ENCODE measurements at regions of chr1 and their contacts with region 1.

Region 1: GRCh38 chr1:7474786-7475502 is 296.2 kb upstream of the VAMP3 start:
- DNase-seq: peak; percentile 51
- ATAC-seq: peak; percentile 75
- H3K4me3 Mint-ChIP-seq: no peak overlapping the region
- H3K27ac Mint-ChIP-seq: no peak overlapping the region
- H3K4me1 Mint-ChIP-seq: no peaks in the 10 kb centered on the region
- H3K27me3 Mint-ChIP-seq: no peaks in the 10 kb centered on the region
- CTCF ChIP-seq: no peak

Region 2: GRCh38 chr1:7224644-7225043 is 250.3 kb before region 1 on chr1:
- CTCF ChIA-PET with region 1: interaction called, 28 read pairs
- POLR2A ChIA-PET with region 1: no interaction called
- DNase-seq: peak; percentile 50
- ATAC-seq: peak; percentile 69
- H3K4me3 Mint-ChIP-seq: no peak overlapping the region
- H3K27ac Mint-ChIP-seq: no peak overlapping the region
- H3K4me1 Mint-ChIP-seq: no peaks in the 10 kb centered on the region
- H3K27me3 Mint-ChIP-seq: no peaks in the 10 kb centered on the region
- CTCF ChIP-seq: no peak

Region 3: DNA sequence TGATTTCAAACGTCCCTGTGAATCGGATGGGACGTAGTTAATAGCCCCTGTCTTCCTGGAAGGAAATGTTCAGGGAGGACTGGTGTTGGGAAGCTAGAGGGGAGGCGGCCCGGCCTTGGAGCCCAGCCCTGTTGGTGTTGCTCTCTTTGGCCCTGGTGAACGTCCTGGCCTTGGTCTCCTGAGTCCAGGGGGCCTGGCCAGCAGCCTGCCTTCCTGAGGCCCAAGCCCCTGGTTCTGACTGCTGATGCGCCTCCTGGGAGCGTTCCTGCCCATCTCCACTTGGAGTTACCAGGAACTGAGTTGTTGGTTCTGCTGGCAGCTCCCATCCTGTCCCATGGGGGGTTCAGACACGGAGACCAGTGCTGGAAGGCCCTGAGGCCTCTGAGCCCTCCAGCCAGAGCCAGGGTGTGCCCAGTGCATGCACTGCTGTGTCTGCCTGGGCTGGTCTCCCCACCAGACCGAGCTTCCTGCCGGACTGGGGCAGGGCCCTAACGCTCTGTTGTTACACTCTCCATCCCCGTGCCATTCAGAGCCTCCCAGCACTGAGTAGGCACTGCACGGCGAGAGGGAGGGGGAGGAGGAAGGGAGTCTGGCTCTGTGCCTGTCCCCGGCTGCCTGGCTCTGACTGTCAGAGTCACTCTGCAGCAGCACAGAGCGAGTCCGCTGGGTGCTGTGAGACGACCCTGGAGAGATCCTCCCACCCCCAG is 86.3 kb before region 1 on chr1:
- CTCF ChIA-PET with region 1: no interaction called
- POLR2A ChIA-PET with region 1: no interaction called
- DNase-seq: no peak
- ATAC-seq: peak; percentile 46
- H3K4me3 Mint-ChIP-seq: no peak overlapping the region
- H3K27ac Mint-ChIP-seq: no peak overlapping the region
- H3K4me1 Mint-ChIP-seq: peaks cover 25% of the 10 kb centered on the region
- H3K27me3 Mint-ChIP-seq: no peaks in the 10 kb centered on the region; the same call in 1 of the 2 replicates
- CTCF ChIP-seq: no peak

Region 4: GRCh38 chr1:7454052-7454815 is 20.7 kb before region 1 on chr1:
- CTCF ChIA-PET with region 1: interaction called, 11 read pairs
- POLR2A ChIA-PET with region 1: no interaction called
- DNase-seq: peak; percentile 38
- ATAC-seq: peak; percentile 17; the same call in 1 of the 2 replicates
- H3K4me3 Mint-ChIP-seq: no peak overlapping the region
- H3K27ac Mint-ChIP-seq: no peak overlapping the region
- H3K4me1 Mint-ChIP-seq: peaks cover 36% of the 10 kb centered on the region
- H3K27me3 Mint-ChIP-seq: no peaks in the 10 kb centered on the region
- CTCF ChIP-seq: no peak

Measured in WTC11 (cell line).